ENCODE measurements at regions of chr6 and their contacts with region 1.

Region 1: DNA sequence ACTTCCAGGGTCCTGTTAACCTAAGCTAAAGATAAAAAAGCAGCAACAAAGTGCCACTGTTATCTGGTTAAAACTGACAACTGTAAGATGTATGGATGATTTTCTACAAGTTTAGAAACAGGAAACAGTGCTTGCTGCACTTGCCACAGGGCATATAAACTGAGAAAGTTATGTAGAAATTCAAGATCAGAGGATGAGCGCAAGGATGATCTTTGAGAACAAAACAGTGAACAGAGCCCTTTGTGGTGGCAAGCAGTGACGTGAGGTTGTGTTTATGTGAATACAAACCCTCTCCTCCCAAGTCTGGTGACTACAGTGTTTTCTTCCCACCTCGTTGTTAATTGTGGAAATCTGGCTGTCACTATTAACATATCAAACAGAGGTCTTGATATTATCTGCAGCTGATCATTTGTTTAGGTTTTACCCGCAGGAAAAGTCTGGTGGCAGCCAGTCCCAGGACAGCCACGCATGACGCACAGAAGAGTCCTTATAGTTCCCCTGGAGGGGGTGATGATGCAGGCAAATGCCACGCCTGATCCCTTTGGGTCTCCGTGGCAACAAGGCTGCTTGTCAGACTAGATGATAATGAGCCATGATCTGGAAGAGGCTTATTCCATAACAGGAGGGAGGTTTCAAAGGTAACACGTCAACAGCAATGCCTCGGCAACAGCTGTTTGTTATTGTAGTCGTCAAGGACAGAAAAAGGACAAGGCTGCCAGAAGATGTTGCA is 43.1 kb upstream of the TNFAIP3 start:
- DNase-seq: peak; percentile 54 to 98 (median 82)
- ATAC-seq: peak; percentile 71
- H3K4me3 ChIP-seq: peak overlapping the region; percentile 1 to 39
- H3K4me3 Mint-ChIP-seq: peak overlapping the region; percentile 59
- H3K27ac ChIP-seq: peak overlapping the region; percentile 91 to 99
- H3K27ac Mint-ChIP-seq: peak overlapping the region; percentile 97
- H3K4me1 ChIP-seq: peaks cover 75% of the 10 kb centered on the region
- H3K4me1 Mint-ChIP-seq: peaks cover 74% of the 10 kb centered on the region
- H3K27me3 ChIP-seq: no peaks in the 10 kb centered on the region
- H3K27me3 Mint-ChIP-seq: no peaks in the 10 kb centered on the region
- CTCF ChIP-seq: no peak

Region 2: DNA sequence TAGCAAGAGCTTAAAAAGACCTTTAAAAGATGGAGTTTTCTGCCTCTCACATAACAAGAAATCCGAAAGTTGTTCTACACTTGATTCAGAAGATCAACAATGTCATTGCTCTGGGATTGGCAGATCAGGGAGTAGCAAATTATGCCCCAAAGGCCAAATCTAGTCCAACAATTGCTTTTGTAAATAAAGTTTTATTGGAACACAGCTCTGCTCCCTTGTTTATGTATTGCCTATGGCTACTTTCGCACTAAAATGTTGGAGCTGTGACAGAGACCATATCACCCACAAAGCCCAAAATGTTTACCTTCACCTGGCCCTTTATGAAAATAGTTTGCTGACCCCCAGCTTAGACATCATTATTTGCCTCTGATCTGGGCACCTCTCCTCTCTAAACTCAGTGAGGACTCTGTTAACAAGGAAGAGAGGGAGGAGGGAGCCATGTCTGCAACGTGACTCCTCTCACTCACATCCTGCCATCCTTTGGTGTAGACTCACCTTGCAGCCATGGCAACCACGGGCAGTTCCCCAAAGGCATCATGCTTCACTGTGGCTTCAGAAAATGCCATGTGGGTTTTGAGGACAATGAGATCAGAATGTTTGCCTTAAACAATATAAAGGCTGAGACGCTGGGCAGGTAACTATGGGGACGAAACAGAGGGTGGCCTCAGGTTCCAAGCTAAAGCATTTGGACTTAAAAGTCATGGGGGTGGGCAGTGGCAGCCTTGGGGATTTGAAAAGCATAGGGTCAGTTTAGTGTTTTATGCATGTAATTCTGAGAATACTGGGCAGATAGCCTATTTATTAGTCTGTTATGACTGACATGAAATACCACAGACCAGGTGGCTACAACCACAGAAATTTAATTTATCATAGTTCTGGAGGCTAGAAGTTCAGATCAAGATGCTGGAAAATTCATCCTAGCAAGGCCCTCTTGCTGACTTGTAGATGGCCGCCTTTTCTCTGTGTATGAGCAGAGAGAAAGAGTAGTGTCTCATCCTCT is 106.6 kb before region 1 on chr6:
- CTCF ChIA-PET with region 1: no interaction called
- POLR2A ChIA-PET with region 1: interaction called, 5 read pairs
- intact Hi-C with region 1: loop called in 1 of 2 experiments (anchors 1 kb)
- DNase-seq: peak; percentile 57 to 95 (median 79)
- ATAC-seq: peak; percentile 50
- H3K4me3 ChIP-seq: no peak overlapping the region
- H3K4me3 Mint-ChIP-seq: peak overlapping the region; percentile 46
- H3K27ac ChIP-seq: peak overlapping the region; percentile 5 to 16
- H3K27ac Mint-ChIP-seq: peak overlapping the region; percentile 95
- H3K4me1 ChIP-seq: peaks cover 28% of the 10 kb centered on the region
- H3K4me1 Mint-ChIP-seq: peaks cover 47% of the 10 kb centered on the region
- H3K27me3 ChIP-seq: no peaks in the 10 kb centered on the region
- H3K27me3 Mint-ChIP-seq: no peaks in the 10 kb centered on the region
- CTCF ChIP-seq: no peak

Region 3: DNA sequence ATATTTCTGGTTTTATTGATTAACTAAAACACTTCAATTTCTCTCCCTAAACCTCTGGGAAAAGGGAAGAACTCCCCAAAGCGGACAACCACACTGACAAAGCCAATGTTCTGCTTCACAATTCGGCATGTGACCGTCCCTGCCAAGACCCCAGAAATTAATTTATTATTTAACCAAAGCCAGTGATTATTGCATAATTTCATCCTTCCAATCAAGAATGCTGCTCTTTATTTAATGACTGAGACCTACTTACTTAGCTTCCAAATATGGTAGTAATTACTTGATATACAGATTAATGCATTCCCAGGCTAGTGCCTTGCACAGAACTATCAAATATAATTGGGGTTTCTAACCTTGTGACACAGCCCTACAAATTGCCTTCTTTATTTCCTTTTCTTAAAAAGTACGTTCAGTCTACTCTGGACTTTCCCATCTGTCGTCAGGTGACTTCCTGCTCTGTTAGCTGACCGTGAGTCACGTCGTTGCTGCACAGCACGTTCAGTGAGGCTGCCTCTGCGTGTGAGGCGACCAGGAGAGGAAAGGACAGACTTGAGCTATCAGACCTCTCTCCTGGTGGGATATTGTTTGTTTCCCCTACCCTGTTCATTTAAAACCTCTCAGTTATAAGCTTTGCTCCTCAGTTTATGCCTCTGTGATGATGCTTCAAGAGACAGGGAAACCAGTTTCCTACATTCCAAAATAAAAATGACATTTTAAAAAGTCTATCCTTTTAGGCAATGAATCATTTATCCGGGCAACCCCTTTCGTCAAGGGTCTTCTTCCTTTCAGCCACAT is 12.7 kb before region 1 on chr6:
- CTCF ChIA-PET with region 1: interaction called, 8 read pairs
- POLR2A ChIA-PET with region 1: interaction called, 13 read pairs
- intact Hi-C with region 1: loop called in 1 of 2 experiments (anchors 1 kb)
- DNase-seq: peak; percentile 53 to 97 (median 75)
- ATAC-seq: peak; percentile 96
- H3K4me3 ChIP-seq: peak overlapping the region; percentile 2 to 10
- H3K4me3 Mint-ChIP-seq: peak overlapping the region; percentile 61
- H3K27ac ChIP-seq: peak overlapping the region; percentile 26 to 80
- H3K27ac Mint-ChIP-seq: peak overlapping the region; percentile 91
- H3K4me1 ChIP-seq: peaks cover 25% of the 10 kb centered on the region
- H3K4me1 Mint-ChIP-seq: peaks cover 33% of the 10 kb centered on the region
- H3K27me3 ChIP-seq: no peaks in the 10 kb centered on the region
- H3K27me3 Mint-ChIP-seq: no peaks in the 10 kb centered on the region
- CTCF ChIP-seq: no peak

Region 4: GRCh38 chr6:137861550-137862337 is 37.8 kb after region 1 on chr6:
- CTCF ChIA-PET with region 1: interaction called, 7 read pairs
- POLR2A ChIA-PET with region 1: interaction called, 32 read pairs
- intact Hi-C with region 1: loop called in 1 of 2 experiments (anchors 2 kb)
- DNase-seq: no peak
- ATAC-seq: no peak
- H3K4me3 ChIP-seq: no peak overlapping the region
- H3K4me3 Mint-ChIP-seq: no peak overlapping the region
- H3K27ac ChIP-seq: no peak overlapping the region
- H3K27ac Mint-ChIP-seq: peak overlapping the region; percentile 66
- H3K4me1 ChIP-seq: peaks cover 9% of the 10 kb centered on the region
- H3K4me1 Mint-ChIP-seq: peaks cover 24% of the 10 kb centered on the region
- H3K27me3 ChIP-seq: no peaks in the 10 kb centered on the region
- H3K27me3 Mint-ChIP-seq: no peaks in the 10 kb centered on the region
- CTCF ChIP-seq: no peak